T-cell (primary cell): ENCODE measurements at regions of chr13 and their contacts with region 1.

Region 1: DNA sequence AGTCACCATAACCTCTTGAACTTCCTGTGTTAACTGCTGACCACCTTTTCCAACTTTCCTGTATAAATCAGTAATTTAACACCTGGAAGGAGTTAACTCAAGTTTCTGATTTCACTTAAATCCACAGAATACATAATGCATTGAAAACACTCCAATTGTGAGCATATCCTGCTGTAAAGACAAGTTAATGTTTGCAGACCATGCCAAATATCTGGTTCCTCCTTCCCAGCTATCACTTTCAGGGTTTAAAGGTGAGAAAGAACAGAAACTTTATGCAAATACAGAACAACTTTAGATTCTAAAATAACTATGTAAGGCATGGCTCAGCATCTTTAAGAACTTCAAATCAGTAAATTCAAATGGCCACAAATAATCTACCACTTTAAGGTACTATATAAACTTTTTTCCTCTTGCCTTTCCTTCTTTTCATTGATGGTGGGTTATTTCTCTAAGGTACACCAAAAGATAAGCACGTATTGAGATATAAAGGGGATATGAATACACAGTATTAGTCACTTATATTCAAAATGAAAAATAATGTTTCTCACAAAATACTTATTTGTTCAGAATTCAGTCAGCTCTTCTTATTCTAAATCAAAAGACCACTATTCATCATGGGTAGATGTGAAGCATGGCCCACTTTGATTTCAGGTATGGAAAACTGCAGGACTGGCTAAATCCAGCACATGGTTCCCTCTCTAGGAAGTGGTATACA is 6.6 kb upstream of the TPTE2 start:
- DNase-seq: no peak
- ATAC-seq: no peak
- H3K4me3 ChIP-seq: no peak overlapping the region
- H3K4me3 Mint-ChIP-seq: no peak overlapping the region
- H3K27ac ChIP-seq: no peak overlapping the region
- H3K27ac Mint-ChIP-seq: no peak overlapping the region
- H3K4me1 ChIP-seq: peaks cover 0 to 6% of the 10 kb centered on the region in 2 experiments
- H3K4me1 Mint-ChIP-seq: no peaks in the 10 kb centered on the region
- H3K27me3 ChIP-seq: peaks cover 0 to 14% of the 10 kb centered on the region in 2 experiments
- H3K27me3 Mint-ChIP-seq: peaks cover 5 to 6% of the 10 kb centered on the region in 2 donors

Region 2: GRCh38 chr13:19633479-19634255 is 65.7 kb after region 1 on chr13 and contains the start of gene MPHOSPH8:
- CTCF ChIA-PET with region 1: no interaction called
- POLR2A ChIA-PET with region 1: interaction called in 1 of 2 experiments, 12 read pairs
- DNase-seq: peak; percentile 82 to 97 (median 91)
- ATAC-seq: peak; percentile 96 to 98 (median 96)
- H3K4me3 ChIP-seq: peak within 1 kb of the TSS; percentile 72 to 83
- H3K4me3 Mint-ChIP-seq: peak within 1 kb of the TSS; percentile 100
- H3K27ac ChIP-seq: peak within 1 kb of the TSS; percentile 89
- H3K27ac Mint-ChIP-seq: peak within 1 kb of the TSS; percentile 99 to 100
- H3K4me1 ChIP-seq: peaks cover 23 to 24% of the 10 kb centered on the region in 2 experiments
- H3K4me1 Mint-ChIP-seq: peaks cover 35 to 46% (median 40%) of the 10 kb centered on the region in 3 donors
- H3K27me3 ChIP-seq: peaks cover 0 to 3% of the 10 kb centered on the region in 2 experiments
- H3K27me3 Mint-ChIP-seq: no peaks in the 10 kb centered on the region
- total RNA-seq, gene MPHOSPH8: 64.5 to 91.3 (median 84.1) TPM